Posterior vena cava (tissue), 2 donors: ENCODE measurements at regions of chr12 and their contacts with region 1.

Region 1: DNA sequence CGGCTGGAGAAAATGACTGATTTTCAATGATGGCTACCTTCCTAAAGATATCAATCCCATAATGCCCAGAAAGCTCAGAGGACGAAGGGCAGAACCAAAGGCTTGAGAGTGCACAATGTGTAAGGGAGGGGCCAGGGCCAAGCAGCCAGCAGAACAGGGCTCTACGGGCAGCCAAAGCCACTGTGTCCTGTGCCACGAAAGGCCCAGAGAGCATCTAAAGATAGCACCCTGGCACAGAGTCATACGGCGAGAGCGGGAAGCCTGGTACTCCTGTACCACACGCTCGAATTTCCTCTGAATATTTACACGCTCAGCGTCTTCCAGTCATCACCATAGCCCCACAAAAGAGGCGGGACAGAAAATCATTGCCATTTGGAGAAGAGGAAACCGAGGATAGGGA is 39.5 kb downstream of the PRMT8 start:
- DNase-seq: peak; percentile 38

Region 2: DNA sequence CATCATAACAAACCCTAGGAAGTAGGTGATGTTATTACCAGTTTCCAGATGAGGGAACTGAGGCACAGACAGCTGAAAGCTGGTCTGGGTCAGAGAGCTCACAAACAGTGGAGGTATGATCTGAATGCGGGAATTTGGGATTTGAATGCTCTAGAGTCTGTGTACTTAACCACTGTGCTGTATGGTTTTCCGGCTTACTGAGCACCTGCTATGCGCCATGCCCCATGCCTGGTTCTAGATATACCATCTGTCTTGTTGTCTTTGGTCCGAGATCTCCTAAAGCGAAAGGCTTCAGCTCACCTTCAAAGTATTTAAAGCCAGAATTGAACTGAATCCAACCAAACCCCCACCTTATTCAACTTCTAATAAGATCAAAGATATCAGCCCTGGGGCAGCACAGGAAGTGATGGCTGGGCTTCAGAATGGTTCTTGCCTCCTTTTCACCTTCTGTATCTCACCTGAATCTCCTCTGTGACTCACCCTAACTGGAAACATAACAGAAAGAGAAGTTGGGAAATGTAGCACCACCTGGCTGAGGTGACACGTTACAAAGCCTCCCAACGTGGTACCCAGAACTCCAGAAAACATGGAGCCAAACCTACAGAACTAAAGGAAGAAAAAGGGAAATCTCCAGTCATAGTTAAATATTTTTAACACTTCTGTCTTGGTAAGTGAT is 14.7 kb after region 1 on chr12:
- intact Hi-C with region 1: loop called in 1 of 2 experiments (anchors 1 kb)
- DNase-seq: no peak

Region 3: GRCh38 chr12:3587402-3588013 is 57.0 kb after region 1 on chr12:
- intact Hi-C with region 1: no loop called
- DNase-seq: no peak

Region 4: DNA sequence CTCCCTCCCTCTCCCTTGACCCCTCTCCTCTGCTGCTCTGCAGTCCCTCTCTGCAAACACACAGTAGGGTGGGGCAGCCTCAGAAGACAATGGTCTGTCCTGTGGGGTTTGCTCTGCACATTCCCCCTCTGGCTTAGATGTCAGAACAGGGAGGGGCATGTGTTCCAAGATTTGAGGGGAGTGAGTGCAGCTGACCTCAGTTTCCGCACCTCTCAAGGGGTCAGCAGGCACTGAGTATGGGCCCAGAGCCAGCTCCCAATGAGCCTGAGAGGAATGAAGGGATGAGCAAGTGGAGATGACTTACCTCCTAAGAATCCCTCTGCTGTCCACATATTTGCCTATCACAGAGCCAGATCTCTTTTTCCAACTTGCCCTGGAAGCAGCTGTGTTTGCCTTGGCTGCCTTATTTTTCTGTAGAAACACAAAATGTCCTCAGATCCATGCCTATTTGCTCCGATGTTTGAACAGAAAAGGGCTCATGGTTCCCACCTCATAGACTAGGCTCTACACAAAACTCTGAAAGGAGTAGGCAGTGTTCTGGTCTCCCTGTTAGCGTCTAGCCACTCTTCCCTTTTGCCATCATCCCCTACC is 111.0 kb after region 1 on chr12:
- intact Hi-C with region 1: no loop called
- DNase-seq: peak; percentile 78

Region 5: GRCh38 chr12:4261655-4262054 is 731.1 kb after region 1 on chr12:
- intact Hi-C with region 1: no loop called
- DNase-seq: no peak